ENCODE measurements at regions of chr16 and their contacts with region 1.

Region 1: DNA sequence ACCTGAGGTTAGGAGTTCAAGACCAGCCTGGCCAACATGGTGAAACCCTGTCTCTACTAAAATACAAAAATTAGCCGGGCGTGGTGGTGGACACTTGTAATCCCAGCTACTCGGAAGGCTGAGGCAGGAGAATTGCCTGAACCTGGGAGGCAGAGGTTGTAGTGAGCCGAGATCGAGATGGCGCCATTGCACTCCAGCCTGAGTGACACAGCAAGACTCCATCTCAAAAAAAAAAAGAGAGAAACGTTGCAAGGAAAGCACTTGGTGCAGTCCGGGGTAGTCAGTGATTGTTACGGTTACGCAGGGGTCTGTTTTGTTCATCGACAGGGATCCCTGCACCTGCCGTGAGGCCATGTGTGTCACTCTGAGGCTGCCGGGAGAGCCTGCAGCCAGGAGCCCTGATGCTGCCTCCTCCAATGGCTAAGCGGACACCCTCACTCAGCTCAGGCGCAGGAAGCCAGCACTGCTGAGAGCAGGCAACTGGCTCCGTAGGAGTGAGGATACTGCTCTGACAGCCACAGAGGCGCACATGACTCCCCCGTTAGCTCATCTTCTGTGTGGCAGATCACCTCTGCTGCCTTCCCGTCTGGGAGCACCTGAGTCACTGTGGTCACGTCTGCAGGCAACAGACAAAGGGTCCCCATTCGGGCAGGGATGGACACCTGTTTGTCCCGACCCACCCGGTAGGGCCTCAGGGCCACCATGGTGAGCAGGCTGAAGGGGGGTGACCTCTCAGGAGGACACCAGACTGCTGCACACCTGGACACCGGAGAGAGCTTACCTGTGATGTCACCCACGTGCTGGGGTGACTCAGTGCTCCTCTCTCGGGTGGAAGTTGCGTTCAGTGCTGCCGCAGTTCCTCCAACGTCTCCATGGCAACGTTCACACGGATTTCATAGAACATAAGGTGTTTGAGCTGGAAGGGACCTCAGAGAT is 5.2 kb upstream of the RAB26 start:
- DNase-seq: no peak
- CTCF ChIP-seq: no peak

Region 2: GRCh38 chr16:1745181-1745899 is 397.9 kb before region 1 on chr16:
- in situ Hi-C with region 1: no loop called
- DNase-seq: no peak
- CTCF ChIP-seq: no peak

Region 3: DNA sequence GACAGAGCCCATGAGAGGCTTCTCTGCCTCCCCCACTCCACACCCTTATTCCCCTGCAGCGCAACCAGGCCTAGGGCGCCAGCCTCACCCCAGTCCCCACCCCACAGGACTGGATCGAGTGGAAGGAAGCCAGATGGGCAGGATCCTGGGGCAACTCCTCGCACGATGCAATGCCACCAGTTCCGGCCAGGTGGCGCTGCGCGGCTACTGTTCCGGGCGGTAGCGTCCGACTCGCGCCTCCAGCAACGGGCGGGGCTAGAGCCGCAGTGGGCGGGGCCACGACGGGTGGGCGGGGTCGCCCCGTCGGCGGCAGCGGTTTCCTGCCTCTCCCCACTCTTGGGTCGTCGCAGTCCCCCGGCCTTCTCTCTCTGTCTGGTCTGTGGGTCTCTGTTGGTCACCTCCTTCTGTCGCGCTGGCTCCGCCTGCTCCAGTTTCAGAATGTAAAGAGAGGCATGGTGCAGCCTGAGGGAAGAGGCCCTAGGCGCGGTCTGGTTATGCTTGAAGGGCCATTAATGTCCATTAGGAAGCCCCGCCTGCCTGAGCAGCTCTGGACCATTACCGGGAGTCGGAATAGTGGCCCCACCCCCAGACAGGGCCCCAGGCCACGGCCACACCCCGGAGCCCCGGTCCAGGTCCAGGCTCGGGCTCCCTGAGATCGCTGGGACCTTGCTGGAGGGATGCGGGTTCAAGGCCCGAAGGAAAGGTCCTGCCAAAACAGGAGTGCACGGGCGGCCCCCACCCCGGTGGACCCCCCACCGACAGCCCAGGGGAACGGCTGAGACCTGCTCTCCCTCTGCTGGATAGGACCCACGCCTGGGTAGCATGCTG is 119.9 kb before region 1 on chr16:
- in situ Hi-C with region 1: loop called (anchors 5 kb)
- DNase-seq: peak; percentile 100
- CTCF ChIP-seq: peak; percentile 94

Region 4: GRCh38 chr16:2531767-2532493 is 388.7 kb after region 1 on chr16:
- in situ Hi-C with region 1: no loop called
- DNase-seq: peak; percentile 99
- CTCF ChIP-seq: no peak

Region 5: DNA sequence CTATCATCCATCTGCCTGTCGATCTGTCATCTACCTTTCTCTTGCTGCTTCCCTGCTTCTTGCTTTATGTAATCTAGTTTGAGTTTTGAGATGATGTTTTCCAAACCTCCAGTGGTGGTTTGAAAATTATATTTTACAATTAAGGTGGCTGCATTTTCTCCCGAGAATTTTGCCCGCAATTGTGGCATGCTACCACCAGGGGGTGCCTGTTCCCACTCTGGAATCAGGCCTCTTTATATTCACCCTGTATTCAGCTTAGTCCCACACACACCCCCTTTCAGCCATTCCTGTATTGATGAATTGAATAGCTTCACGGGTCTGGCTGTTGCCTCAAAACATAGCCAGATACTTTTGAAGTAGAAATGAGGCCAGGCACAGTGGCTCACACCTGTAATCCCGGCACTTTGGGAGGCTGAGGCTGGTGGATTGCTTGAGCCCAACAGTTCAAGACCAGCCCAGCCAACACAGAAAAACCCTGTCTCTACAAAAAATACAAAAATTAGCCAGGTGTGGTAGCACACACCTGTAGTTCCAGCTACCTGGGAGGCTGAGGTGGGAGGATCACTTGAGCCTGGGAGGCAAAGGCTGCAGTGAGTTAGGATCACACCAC is 711.6 kb after region 1 on chr16:
- in situ Hi-C with region 1: no loop called
- DNase-seq: peak; percentile 41
- CTCF ChIP-seq: peak; percentile 36